ENCODE measurements at regions of chr3 and their contacts with region 1.

Region 1: DNA sequence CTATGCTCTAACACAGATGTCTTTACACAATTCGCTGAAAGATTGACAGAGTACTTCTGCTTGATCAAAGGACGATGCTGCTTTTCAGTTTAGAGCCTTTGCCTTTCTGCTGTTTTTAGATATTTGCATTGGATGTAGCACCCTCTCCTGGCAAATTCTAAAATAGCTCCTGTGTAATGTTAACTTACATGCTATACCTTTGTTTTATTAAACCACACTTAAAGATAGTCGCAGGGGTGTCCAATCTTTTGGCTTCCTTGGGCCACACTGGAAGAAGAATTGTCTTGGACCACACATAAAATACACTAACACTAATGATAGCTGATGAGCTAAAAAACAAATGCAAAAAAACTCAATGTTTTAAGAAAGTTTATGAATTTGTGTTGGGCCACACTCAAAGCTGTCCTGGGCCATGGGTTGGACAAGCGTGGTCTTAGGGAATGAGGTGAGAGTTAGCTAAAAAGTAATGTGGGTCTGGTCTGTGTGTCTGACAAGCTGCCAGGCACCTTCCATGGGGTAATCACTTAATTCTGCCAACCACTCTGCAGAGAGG is 62.9 kb downstream of the ATG7 start:
- DNase-seq: peak; percentile 48
- ATAC-seq: peak; percentile 84
- H3K4me3 ChIP-seq: no peak overlapping the region
- H3K27ac ChIP-seq: no peak overlapping the region
- H3K4me1 ChIP-seq: no peaks in the 10 kb centered on the region
- H3K27me3 ChIP-seq: no peaks in the 10 kb centered on the region
- CTCF ChIP-seq: peak; percentile 70
- EP300 ChIP-seq: no peak
- POLR2A ChIP-seq: no peak
- RAD21 ChIP-seq: peak; percentile 38; the same call in 1 of the 2 replicates

Region 2: GRCh38 chr3:10532939-10533736 is 802.0 kb before region 1 on chr3:
- CTCF ChIA-PET with region 1: no interaction called
- POLR2A ChIA-PET with region 1: no interaction called
- in situ Hi-C with region 1: no loop called
- intact Hi-C with region 1: no loop called
- DNase-seq: no peak
- ATAC-seq: no peak
- H3K4me3 ChIP-seq: no peak overlapping the region
- H3K27ac ChIP-seq: no peak overlapping the region
- H3K4me1 ChIP-seq: no peaks in the 10 kb centered on the region
- H3K27me3 ChIP-seq: peaks cover 1 to 12% of the 10 kb centered on the region in 2 experiments; a peak in 1 of 5 replicates
- CTCF ChIP-seq: no peak
- EP300 ChIP-seq: no peak
- POLR2A ChIP-seq: no peak
- RAD21 ChIP-seq: no peak

Region 3: DNA sequence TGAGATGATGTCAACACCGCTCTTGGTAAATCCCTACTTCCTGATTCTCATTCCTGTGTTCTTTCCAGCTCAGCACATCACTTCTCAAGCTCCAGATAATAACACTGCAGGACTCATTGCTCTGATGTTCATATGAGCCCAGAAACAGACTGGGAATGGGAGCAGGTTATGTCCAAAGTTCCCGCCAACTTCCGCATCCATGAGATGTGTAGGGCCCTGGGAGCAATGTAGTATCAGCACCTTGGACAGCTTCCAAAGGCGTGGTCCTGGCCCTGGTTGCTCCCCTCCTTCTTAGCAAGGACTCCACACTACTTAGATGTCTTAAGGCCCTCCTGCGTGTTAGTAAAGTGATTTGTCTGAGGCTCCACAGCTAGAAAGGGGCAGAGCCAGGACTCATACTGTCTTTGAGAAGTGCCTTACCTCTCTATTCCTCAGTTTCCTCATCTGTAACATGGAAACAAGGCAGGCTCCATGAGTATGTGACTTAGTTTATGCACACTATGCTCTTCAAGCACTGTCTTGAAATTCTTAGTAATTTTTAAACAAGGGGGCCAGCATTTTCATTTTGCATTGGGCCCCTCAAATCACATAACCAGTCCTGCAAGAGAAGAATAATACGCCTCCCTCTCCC is 370.5 kb before region 1 on chr3:
- CTCF ChIA-PET with region 1: no interaction called
- POLR2A ChIA-PET with region 1: no interaction called
- in situ Hi-C with region 1: no loop called
- intact Hi-C with region 1: no loop called
- DNase-seq: no peak
- ATAC-seq: peak; percentile 54; the same call in 2 of the 3 replicates
- H3K4me3 ChIP-seq: no peak overlapping the region
- H3K27ac ChIP-seq: no peak overlapping the region
- H3K4me1 ChIP-seq: no peaks in the 10 kb centered on the region
- H3K27me3 ChIP-seq: peaks cover 1 to 4% of the 10 kb centered on the region in 2 experiments; a peak in 1 of 5 replicates
- CTCF ChIP-seq: no peak
- EP300 ChIP-seq: no peak
- POLR2A ChIP-seq: no peak
- RAD21 ChIP-seq: no peak

Region 4: GRCh38 chr3:11155341-11156025 is 179.6 kb before region 1 on chr3:
- CTCF ChIA-PET with region 1: no interaction called
- POLR2A ChIA-PET with region 1: no interaction called
- in situ Hi-C with region 1: no loop called
- intact Hi-C with region 1: loop called (anchors 10 kb)
- DNase-seq: peak; percentile 24
- ATAC-seq: peak; percentile 99
- H3K4me3 ChIP-seq: no peak overlapping the region
- H3K27ac ChIP-seq: no peak overlapping the region
- H3K4me1 ChIP-seq: no peaks in the 10 kb centered on the region
- H3K27me3 ChIP-seq: peaks cover 0 to 50% of the 10 kb centered on the region in 2 experiments; a peak in 4 of 5 replicates
- CTCF ChIP-seq: peak; percentile 82
- EP300 ChIP-seq: no peak
- POLR2A ChIP-seq: no peak
- RAD21 ChIP-seq: peak; percentile 38

Region 5: DNA sequence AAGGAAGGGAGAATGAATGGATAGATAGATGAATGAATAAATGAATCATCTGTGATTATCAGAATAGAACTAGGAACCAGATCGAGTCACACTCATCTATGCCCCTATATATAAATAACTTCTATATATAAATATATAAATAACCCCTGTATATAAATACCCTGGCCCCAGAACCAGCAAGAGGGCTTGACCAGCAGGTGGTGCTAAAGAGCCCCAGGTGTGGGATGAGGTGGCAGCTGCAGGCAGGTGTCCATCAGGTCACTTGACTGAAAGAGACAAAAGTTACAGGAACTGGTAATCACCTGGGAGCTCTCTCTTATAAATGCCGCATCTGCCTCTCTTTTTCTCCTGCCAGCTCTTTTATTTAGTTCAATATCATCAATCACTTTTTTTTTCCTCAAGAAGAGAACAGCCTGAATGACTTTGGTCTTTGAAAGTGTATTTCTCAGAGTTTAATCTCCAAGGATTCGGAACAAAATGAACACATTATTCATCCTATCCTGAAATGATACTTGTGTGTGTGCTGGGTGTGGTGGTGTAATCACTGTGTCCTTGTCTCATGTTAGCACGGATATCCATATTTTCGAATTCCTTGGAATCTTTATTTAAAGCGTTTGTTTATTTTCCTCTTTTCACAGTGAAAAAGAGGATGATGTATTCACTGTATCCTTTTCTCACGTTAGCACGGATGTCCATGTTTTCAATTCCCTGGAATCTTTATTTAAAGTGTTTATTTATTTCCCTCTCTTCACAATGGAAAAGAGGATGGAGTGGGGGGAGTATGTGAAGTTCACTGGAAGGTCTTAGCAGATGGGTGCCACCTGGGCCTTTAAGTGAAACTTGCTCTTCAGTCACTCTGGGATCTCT is 98.3 kb before region 1 on chr3:
- CTCF ChIA-PET with region 1: interaction called, 24 read pairs
- POLR2A ChIA-PET with region 1: no interaction called
- in situ Hi-C with region 1: loop called (anchors 5 kb)
- intact Hi-C with region 1: loop called (anchors 1 kb)
- DNase-seq: peak; percentile 39
- ATAC-seq: peak; percentile 79
- H3K4me3 ChIP-seq: no peak overlapping the region
- H3K27ac ChIP-seq: no peak overlapping the region
- H3K4me1 ChIP-seq: no peaks in the 10 kb centered on the region
- H3K27me3 ChIP-seq: peaks cover 0 to 3% of the 10 kb centered on the region in 2 experiments; a peak in 2 of 5 replicates
- CTCF ChIP-seq: peak; percentile 63
- EP300 ChIP-seq: no peak
- POLR2A ChIP-seq: no peak
- RAD21 ChIP-seq: no peak